Aorta (tissue), 5 donors: ENCODE measurements at regions of chr12 and their contacts with region 1.

Region 1: DNA sequence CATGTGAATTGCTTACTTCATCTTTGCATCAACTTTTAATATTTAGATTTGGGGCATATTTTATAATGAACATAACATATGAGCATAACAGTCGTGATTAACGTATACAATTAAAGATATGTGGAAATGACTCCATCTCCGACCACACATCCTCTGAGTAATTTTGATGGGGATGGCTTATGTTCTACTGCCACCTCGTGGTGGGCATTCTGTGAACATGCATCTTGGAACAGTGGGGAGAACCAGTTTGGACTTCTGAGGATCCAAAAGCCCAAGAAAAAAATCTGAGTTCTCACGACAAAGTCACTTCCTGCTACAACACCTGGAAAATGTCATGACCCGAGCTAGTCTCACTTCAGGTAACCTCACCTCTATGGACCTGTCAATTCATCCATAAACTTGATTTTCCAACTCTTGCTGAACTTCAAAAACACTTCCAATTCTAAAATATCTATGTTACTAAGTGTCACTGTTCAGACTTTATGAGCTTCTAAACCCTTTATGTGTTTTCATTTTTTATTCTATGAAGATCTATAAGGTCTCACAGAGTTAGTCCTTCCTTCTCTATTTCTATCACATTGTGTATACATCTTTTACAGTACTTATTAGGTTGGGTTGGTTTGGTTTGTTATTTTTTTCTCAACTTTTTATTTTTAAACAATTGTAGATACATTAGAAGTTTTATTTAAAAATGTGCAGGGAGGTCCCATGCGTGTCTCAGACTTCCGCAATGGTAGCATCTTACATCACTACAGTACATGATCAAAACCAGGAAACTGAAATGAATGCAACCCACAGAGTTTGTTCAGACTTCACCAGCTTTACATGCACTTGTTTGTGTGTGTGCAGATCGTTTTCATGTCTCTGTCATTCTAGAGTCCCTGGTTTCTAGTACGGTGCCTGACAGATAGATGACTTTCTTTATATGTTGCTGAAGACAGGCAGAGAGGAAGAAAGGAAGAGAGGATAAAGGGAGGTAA is 38.2 kb upstream of the STAB2 start:
- DNase-seq: peak in 1 of 2 donors; percentile 51
- ATAC-seq: peak; percentile 74
- H3K4me3 ChIP-seq: no peak overlapping the region
- H3K27ac ChIP-seq: no peak overlapping the region
- H3K4me1 ChIP-seq: no peaks in the 10 kb centered on the region
- H3K27me3 ChIP-seq: peaks cover 0 to 2% of the 10 kb centered on the region in 2 donors

Region 2: DNA sequence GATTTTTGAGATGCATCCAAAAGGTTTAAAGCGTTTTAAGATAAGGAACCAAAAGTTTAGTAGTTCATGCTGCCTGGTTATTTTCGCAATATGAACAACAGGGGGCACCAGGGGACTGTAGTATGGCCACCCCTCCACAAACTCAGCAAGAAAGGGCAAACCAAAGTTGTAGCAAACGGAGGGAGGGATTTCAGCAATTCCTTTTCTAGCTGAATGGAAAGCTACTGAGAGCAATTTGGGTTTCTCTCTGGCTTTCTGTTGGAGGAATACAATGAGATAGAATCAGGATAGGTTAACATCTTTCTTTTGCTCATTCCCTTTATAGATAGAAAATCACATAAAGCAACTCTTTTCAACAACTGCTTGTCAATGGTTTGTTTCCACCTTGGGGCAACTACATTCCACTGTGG is 1609.1 kb before region 1 on chr12:
- intact Hi-C with region 1: loop called in 1 of 2 experiments (anchors 5 kb)
- DNase-seq: no peak
- ATAC-seq: peak; percentile 85
- H3K4me3 ChIP-seq: no peak overlapping the region
- H3K27ac ChIP-seq: no peak overlapping the region
- H3K4me1 ChIP-seq: no peaks in the 10 kb centered on the region
- H3K27me3 ChIP-seq: no peaks in the 10 kb centered on the region

Region 3: GRCh38 chr12:102883204-102883799 is 665.6 kb before region 1 on chr12:
- intact Hi-C with region 1: loop called in 1 of 2 experiments (anchors 5 kb)
- DNase-seq: peak in 1 of 2 donors; percentile 83
- ATAC-seq: no peak
- H3K4me3 ChIP-seq: no peak overlapping the region
- H3K27ac ChIP-seq: no peak overlapping the region
- H3K4me1 ChIP-seq: no peaks in the 10 kb centered on the region
- H3K27me3 ChIP-seq: no peaks in the 10 kb centered on the region

Region 4: DNA sequence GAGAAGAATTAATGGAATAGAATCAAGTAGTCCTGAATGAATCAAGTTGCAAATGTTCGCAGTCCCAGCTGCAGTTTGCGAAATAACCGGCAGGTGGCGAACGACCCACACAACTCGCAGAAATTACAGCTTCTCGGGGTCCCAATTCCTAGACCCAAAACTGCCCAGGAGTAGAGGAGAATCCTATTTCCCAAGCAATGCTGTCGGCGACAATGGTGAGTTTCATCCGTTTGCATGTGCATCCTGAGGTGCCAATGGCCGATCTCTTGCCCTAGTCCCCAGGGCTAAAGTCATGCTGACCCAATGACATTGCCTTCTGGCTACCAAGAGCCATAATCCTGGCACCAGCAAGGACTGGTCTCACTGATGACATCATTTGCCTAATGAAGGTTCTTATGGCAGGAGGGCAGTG is 600.0 kb before region 1 on chr12:
- intact Hi-C with region 1: loop called in 1 of 2 experiments (anchors 5 kb)
- DNase-seq: peak in 1 of 2 donors; percentile 74
- ATAC-seq: no peak
- H3K4me3 ChIP-seq: no peak overlapping the region
- H3K27ac ChIP-seq: no peak overlapping the region
- H3K4me1 ChIP-seq: no peaks in the 10 kb centered on the region
- H3K27me3 ChIP-seq: no peaks in the 10 kb centered on the region

Region 5: DNA sequence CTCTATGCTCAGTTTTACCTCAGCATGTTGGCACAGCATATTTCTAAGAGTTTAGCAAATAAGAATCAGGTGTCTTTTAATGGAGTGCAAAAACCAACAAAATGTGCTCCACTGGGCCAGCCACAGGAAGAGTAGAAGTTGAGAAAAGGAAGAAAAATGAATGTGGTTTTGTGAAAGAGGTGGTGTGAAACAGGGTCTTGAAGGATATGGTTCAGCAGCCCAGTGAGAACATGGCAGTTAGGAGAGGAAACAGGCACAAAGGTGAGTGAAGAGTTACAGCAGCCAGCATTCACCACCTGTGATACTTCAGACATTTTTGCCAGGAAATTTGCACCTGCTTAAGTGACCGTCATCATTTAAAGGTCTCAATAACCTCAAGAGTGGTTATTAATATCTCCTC is 40.6 kb after region 1 on chr12:
- intact Hi-C with region 1: no loop called
- DNase-seq: no peak
- ATAC-seq: no peak
- H3K4me3 ChIP-seq: no peak overlapping the region
- H3K27ac ChIP-seq: no peak overlapping the region
- H3K4me1 ChIP-seq: no peaks in the 10 kb centered on the region
- H3K27me3 ChIP-seq: no peaks in the 10 kb centered on the region